GM10248 (cell line): ENCODE measurements at regions of chr14 and their contacts with region 1.

Region 1: GRCh38 chr14:75487155-75487671 is 35.1 kb upstream of the BATF start:
- DNase-seq: peak; percentile 56
- CTCF ChIP-seq: no peak

Region 2: DNA sequence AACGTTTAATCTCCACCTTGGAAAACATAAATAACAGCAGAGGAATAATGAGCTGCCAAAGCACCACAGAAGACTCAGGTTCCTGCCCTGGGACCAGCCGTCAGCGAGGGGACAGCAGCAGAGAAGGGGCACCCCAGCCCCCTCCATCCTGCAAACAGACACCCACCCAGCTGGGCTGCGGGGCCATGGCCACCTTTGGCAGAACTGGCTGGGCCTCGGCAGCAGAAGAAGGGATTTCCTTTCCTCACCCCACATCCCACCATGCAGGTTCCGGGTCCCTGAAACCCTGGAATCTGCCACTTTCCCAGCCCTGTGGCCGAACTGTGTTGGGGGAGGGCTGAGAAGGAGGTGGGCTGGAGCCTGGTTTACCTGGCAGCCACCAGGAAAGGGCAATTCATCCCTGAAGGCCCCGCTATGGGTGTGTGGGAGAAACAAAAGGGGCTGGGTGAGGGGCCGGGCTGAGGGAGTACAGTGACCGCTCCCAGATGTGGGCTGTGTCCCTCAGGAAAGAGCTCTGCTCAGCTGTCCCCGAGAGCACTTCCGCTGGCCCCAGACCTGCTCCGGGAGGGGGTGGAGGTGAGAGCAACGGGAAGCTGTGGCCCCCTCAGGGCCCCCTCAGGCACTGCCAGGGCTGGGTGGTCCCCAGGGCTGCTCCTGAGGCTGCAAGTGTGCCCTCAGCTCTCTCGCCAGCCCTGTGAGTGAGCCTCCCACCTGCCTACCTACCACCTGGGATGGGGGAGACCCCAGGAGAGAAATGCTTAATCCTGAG is 535.6 kb before region 1 on chr14:
- CTCF ChIA-PET with region 1: no interaction called
- POLR2A ChIA-PET with region 1: no interaction called
- DNase-seq: no peak
- CTCF ChIP-seq: no peak

Region 3: GRCh38 chr14:75307700-75308379 is 179.4 kb before region 1 on chr14:
- CTCF ChIA-PET with region 1: interaction called, 55 read pairs
- POLR2A ChIA-PET with region 1: no interaction called
- DNase-seq: peak; percentile 59
- CTCF ChIP-seq: peak; percentile 87

Region 4: DNA sequence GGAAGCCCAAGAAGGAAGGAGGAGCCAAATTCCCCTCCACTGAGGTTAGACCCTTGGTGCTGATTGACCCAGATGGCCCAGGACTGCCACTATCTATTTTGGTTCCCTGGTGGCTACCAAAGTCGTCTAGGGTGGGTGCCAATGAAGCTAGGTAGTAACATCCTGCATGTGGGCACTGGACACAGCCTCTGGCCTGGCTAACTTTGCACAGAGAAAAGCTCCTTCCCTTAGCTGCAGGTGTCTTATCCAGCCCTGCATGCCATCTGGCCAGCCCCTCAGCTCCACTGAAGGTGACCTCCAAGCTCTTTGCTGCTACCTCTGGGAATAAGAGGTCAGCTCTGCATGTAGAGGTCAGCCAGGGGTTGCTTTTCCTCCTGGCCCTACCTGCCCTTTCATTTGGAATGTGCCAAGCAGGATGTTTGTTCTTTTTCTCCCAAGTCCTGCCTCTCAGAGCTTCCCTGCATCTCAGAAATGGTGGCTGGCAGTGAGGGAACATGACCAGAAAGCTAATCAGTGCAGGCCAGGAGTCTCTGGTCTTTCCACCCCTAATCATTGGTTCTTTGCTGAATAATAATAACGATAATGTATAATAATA is 25.4 kb before region 1 on chr14:
- CTCF ChIA-PET with region 1: interaction called, 11 read pairs
- POLR2A ChIA-PET with region 1: no interaction called
- DNase-seq: no peak
- CTCF ChIP-seq: no peak

Region 5: GRCh38 chr14:75476274-75476995 is 10.8 kb before region 1 on chr14:
- CTCF ChIA-PET with region 1: interaction called, 37 read pairs
- POLR2A ChIA-PET with region 1: interaction called, 4 read pairs
- DNase-seq: no peak
- CTCF ChIP-seq: no peak

Region 6: DNA sequence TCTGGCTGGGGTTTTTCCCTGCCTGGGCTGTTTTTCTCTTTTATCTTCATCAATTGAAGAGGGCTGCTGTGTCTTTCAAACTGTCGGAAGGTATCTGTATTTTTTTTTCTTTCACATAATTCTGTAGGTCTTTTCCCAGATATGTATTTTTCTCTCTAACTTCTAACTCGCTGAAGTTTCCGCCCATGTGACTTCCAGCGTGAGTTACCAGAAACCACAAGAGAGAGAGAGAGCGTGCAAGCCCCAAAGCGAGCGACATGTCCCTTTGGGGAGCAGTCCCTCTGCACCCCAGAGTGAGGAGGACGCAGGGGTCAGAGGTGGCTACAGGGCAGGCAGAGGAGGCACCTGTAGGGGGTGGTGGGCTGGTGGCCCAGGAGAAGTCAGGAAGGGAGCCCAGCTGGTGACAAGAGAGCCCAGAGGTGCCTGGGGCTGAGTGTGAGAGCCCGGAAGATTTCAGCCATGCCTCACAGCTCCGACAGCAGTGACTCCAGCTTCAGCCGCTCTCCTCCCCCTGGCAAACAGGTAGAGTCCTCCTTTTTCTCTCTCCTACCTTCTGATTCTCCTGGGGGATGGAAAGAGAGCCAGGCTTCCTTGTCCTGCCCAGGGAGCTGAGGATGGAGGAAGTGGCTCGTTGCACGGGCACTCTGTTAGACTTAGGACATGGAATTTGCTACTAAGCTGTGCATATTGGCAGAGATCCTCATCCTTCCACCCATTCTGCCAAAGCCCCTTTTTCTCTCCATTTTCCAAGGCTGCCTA is 35.2 kb after region 1 on chr14 and contains the start of gene BATF:
- CTCF ChIA-PET with region 1: interaction called, 41 read pairs
- POLR2A ChIA-PET with region 1: no interaction called
- DNase-seq: peak; percentile 77
- CTCF ChIP-seq: no peak